ENCODE measurements at regions of chr14 and their contacts with region 1.

Region 1: DNA sequence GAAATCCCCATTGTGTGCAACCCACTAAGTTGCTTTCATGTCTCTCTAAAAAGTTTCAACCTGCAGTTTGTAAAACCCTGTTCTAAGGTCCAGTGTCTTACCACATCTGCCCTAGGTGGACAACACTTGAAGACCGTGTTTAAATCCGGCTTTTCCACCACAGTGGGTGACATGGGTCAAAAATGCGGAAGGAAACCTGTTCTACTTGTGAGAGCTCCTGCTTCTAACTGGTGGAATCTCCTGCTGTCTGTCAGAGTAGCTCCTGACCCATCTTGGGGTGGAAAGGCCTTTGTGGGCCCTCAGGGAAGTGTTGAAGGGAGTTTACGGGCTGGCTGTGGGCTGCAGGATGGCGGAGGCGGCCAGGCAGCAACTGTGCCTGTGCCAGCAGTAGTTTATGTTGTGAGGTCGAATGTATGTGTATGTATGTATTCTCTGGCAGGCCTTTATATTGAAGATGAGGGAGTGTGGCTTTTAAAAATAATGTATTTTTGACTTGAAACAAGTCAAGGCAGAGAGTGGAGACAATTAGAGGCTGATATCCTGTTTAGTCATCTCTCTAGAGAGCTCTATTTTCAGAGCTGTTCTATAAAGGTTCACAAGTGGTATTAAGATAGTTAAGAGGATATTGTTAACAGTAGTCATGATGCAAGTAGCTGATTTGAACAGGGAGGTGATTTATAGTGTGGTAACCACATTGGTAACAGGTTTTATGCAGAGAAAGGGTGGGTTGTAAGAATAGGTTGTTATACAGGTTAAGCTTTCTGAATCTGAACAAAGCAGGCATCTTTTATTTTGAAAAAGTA is 67.0 kb downstream of the PRKCH start:
- DNase-seq: peak; percentile 64
- H3K4me3 Mint-ChIP-seq: no peak overlapping the region
- H3K27ac Mint-ChIP-seq: no peak overlapping the region
- H3K4me1 Mint-ChIP-seq: peaks cover 14% of the 10 kb centered on the region
- H3K27me3 Mint-ChIP-seq: no peaks in the 10 kb centered on the region

Region 2: DNA sequence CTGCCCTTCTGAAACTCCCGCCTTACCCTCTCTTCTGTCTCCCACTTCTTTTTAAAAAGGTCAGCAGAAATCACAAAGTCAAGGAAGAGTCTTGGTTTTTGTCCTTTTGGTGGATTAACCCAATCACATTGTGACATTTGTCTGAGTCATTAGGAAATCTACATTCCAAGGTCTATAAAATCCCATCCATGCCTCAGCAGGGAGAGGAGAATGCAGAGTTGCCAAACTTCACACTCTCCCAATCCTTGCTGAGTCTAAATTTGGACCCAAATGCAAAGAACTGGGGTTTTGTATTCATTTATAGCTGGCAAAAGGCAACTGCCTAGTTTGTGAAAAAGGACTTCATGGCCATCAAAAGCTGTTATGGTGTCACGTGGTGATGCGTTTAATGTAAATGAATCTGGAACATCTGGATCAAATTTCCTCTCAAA is 175.2 kb before region 1 on chr14:
- CTCF ChIA-PET with region 1: no interaction called
- POLR2A ChIA-PET with region 1: no interaction called
- intact Hi-C with region 1: no loop called
- DNase-seq: no peak
- H3K4me3 Mint-ChIP-seq: no peak overlapping the region
- H3K27ac Mint-ChIP-seq: no peak overlapping the region
- H3K4me1 Mint-ChIP-seq: no peaks in the 10 kb centered on the region
- H3K27me3 Mint-ChIP-seq: peaks cover 14% of the 10 kb centered on the region

Region 3: GRCh38 chr14:61321385-61322010 is 66.9 kb before region 1 on chr14 and contains the start of gene PRKCH:
- CTCF ChIA-PET with region 1: interaction called, 3 read pairs
- POLR2A ChIA-PET with region 1: interaction called, 12 read pairs
- intact Hi-C with region 1: loop called (anchors 1 kb)
- DNase-seq: peak; percentile 90
- H3K4me3 Mint-ChIP-seq: peak within 1 kb of the TSS; percentile 99
- H3K27ac Mint-ChIP-seq: peak within 1 kb of the TSS; percentile 93
- H3K4me1 Mint-ChIP-seq: peaks cover 24% of the 10 kb centered on the region
- H3K27me3 Mint-ChIP-seq: no peaks in the 10 kb centered on the region
- total RNA-seq, gene PRKCH: 142 to 147 TPM

Region 4: DNA sequence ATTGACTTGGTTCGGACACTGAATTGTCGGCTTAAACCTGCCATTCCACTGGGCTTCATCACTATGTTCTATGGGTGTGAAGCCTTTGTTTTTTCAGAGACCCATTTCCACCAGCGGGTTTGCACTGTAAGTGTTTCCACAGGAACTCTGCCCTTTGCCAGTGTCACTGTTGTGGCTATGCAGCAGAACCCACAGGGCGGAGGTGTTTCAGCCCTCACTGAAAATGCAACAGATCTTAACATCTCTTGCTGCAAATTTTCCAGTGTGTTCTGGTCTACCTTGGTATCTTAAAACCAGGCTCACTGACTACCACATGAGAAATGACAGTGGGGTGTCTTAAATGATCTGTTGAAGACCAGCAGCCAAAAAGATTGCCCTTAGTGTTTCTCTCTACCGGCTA is 45.9 kb before region 1 on chr14:
- CTCF ChIA-PET with region 1: interaction called, 7 read pairs
- POLR2A ChIA-PET with region 1: interaction called, 12 read pairs
- intact Hi-C with region 1: loop called (anchors 1 kb)
- DNase-seq: peak; percentile 91
- H3K4me3 Mint-ChIP-seq: peak overlapping the region; percentile 82
- H3K27ac Mint-ChIP-seq: peak overlapping the region; percentile 98
- H3K4me1 Mint-ChIP-seq: peaks cover 94% of the 10 kb centered on the region
- H3K27me3 Mint-ChIP-seq: no peaks in the 10 kb centered on the region

Region 5: DNA sequence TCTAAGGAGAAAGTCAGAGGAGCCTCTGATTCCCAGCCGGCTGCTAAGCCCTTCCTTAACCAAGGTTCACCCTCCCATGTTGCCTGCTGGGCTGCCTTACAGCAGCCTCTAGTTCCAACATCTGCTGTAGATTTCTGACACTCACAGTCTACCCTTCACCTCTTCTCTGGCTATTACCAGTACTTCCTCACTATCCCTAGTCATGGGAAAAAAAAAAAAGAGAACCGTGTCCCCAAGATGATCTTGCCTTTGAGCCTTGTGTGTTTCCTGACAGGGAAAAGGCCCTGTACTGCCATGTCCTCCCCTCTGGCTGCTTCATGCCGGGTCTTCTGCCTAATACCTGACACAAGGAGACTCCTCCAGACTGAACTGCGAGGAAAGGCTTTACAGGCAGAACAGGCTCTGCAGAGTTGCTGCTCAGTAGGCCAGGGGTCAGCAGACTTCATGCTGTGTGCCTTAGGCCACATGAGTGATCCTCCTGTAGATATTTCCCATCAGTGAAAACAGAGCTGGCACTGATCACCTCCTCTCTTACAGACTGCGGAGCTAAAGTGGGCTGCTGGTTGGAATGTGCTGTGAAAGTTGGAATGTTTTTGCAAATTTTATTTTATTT is 20.2 kb before region 1 on chr14:
- CTCF ChIA-PET with region 1: interaction called, 6 read pairs
- POLR2A ChIA-PET with region 1: interaction called, 4 read pairs
- intact Hi-C with region 1: loop called (anchors 1 kb)
- DNase-seq: no peak
- H3K4me3 Mint-ChIP-seq: no peak overlapping the region
- H3K27ac Mint-ChIP-seq: peak overlapping the region; percentile 42
- H3K4me1 Mint-ChIP-seq: peaks cover 53% of the 10 kb centered on the region
- H3K27me3 Mint-ChIP-seq: no peaks in the 10 kb centered on the region

Region 6: GRCh38 chr14:61406198-61406597 is 17.8 kb after region 1 on chr14:
- CTCF ChIA-PET with region 1: interaction called, 3 read pairs
- POLR2A ChIA-PET with region 1: interaction called, 6 read pairs
- intact Hi-C with region 1: loop called (anchors 1 kb)
- DNase-seq: no peak
- H3K4me3 Mint-ChIP-seq: no peak overlapping the region
- H3K27ac Mint-ChIP-seq: peak overlapping the region; percentile 72
- H3K4me1 Mint-ChIP-seq: peaks cover 69% of the 10 kb centered on the region
- H3K27me3 Mint-ChIP-seq: no peaks in the 10 kb centered on the region

Region 7: GRCh38 chr14:61456720-61457119 is 68.3 kb after region 1 on chr14:
- CTCF ChIA-PET with region 1: interaction called, 3 read pairs
- POLR2A ChIA-PET with region 1: interaction called, 5 read pairs
- intact Hi-C with region 1: loop called (anchors 1 kb)
- DNase-seq: peak; percentile 87
- H3K4me3 Mint-ChIP-seq: no peak overlapping the region
- H3K27ac Mint-ChIP-seq: peak overlapping the region; percentile 60
- H3K4me1 Mint-ChIP-seq: peaks cover 81% of the 10 kb centered on the region
- H3K27me3 Mint-ChIP-seq: no peaks in the 10 kb centered on the region

Measured in activated CD4-positive, alpha-beta memory T cell treated with anti-CD3 and anti-CD28 coated beads for 36 hours (primary cell).